ENCODE measurements at regions of chr12 and their contacts with region 1.

Region 1: GRCh38 chr12:19694627-19695026 is 255.3 kb downstream of the AEBP2 start:
- DNase-seq: no peak
- H3K4me3 ChIP-seq: no peak overlapping the region
- H3K27ac ChIP-seq: no peak overlapping the region
- H3K4me1 ChIP-seq: no peaks in the 10 kb centered on the region
- H3K27me3 ChIP-seq: no peaks in the 10 kb centered on the region
- CTCF ChIP-seq: no peak
- POLR2A ChIP-seq: no peak

Region 2: DNA sequence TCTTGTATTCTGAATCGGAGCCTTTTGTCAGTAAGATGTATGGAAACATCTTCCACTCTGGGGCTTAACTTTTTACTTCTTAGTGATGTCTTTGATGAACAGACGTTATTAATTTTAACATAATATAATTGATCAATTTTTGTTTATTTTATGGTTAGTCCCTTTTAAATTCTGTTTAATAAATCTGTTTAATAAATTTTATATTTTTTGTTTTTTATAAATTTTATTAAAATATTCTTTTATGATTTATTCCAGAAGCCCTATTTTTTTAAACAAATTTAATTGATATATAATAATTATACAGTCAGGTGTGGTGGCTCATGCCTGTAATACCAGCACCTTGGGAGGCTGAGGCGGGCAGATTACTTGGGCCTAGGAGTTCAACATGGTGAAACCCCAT is 20.2 kb before region 1 on chr12:
- intact Hi-C with region 1: loop called (anchors 1 kb)
- DNase-seq: no peak
- H3K4me3 ChIP-seq: no peak overlapping the region
- H3K27ac ChIP-seq: no peak overlapping the region
- H3K4me1 ChIP-seq: no peaks in the 10 kb centered on the region
- H3K27me3 ChIP-seq: no peaks in the 10 kb centered on the region
- CTCF ChIP-seq: no peak
- POLR2A ChIP-seq: no peak

Region 3: DNA sequence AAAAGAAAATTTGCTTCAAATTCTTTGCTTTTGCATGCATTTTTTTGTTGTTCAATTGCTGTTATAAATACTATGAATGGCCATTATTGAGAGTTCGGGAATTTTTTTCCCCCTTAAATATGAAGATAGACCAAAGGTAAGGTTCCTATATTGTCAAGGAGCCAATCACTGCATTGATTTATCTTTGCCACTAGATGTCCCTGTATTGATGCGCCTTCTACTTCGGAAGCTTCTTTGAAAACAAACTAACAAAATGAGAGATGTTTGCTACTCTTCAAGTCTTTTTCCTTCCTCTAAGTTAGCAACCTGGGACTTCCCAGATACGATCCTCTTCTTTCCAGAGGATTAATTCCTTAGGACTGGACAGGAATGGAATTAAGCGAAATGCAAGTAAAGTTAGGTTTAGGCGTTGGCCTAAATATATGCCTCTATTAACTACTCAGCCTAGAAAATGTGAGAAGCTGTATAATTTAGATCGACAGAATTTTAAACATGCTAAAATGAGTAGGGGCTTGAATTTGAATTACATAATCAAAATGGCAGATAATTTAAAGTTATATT is 62.8 kb after region 1 on chr12:
- intact Hi-C with region 1: no loop called
- DNase-seq: no peak
- H3K4me3 ChIP-seq: no peak overlapping the region
- H3K27ac ChIP-seq: no peak overlapping the region
- H3K4me1 ChIP-seq: no peaks in the 10 kb centered on the region
- H3K27me3 ChIP-seq: no peaks in the 10 kb centered on the region
- CTCF ChIP-seq: peak in 1 of 3 donors; percentile 44
- POLR2A ChIP-seq: no peak